Transverse colon (tissue), 4 donors: ENCODE measurements at regions of chr14 and their contacts with region 1.

Region 1: DNA sequence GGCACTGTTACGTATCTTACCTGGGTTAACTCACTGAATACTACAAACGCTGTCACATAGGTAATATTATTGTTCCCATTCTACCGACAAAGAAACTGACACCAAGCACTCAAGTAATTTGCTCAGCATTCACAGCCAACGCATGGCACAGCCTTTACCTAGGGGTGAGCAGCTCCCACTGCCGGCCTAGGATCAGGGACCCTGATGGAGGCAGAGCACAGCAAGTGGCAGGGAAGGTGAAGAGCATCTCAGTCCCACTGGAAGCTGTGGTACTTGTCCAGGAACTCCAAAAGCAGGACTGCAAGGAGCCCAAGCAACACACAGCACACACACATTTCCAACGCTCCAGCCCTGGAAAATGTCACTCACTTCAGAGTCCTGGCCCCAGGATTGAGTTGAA is 111.8 kb upstream of the CDKN3 start:
- DNase-seq: no peak
- H3K4me3 ChIP-seq: no peak overlapping the region
- H3K27ac ChIP-seq: no peak overlapping the region
- H3K4me1 ChIP-seq: no peaks in the 10 kb centered on the region
- H3K27me3 ChIP-seq: no peaks in the 10 kb centered on the region
- CTCF ChIP-seq: no peak
- EP300 ChIP-seq: no peak
- POLR2A ChIP-seq: no peak

Region 2: DNA sequence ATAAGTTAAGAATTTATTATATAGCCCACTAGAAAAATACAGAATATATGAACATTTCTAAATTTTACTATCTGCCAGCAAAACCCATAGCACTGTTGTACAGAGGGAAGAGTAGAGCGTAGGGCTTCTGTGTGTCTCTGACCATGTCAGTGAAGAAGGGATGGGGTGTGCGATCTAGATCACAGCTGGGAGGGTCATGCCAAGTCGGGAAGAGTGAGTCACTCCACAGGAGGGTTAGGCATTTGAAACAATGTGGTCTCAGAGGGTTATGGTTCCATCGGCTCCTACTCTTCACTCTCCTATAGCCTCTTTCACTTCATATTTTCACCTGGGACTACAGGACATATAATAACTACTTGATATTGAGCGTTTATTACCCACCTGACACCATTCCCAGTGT is 946.8 kb before region 1 on chr14:
- in situ Hi-C with region 1: no loop called
- intact Hi-C with region 1: loop called (anchors 5 kb)
- DNase-seq: no peak
- H3K4me3 ChIP-seq: no peak overlapping the region
- H3K27ac ChIP-seq: no peak overlapping the region
- H3K4me1 ChIP-seq: no peaks in the 10 kb centered on the region
- H3K27me3 ChIP-seq: no peaks in the 10 kb centered on the region
- CTCF ChIP-seq: no peak
- EP300 ChIP-seq: no peak
- POLR2A ChIP-seq: no peak

Region 3: GRCh38 chr14:54200726-54201125 is 84.3 kb before region 1 on chr14:
- in situ Hi-C with region 1: no loop called
- intact Hi-C with region 1: no loop called
- DNase-seq: no peak
- H3K4me3 ChIP-seq: no peak overlapping the region
- H3K27ac ChIP-seq: no peak overlapping the region
- H3K4me1 ChIP-seq: no peaks in the 10 kb centered on the region
- H3K27me3 ChIP-seq: no peaks in the 10 kb centered on the region
- CTCF ChIP-seq: no peak
- EP300 ChIP-seq: no peak
- POLR2A ChIP-seq: no peak